G401 (cell line): ENCODE measurements at regions of chr17 and their contacts with region 1.

Region 1: DNA sequence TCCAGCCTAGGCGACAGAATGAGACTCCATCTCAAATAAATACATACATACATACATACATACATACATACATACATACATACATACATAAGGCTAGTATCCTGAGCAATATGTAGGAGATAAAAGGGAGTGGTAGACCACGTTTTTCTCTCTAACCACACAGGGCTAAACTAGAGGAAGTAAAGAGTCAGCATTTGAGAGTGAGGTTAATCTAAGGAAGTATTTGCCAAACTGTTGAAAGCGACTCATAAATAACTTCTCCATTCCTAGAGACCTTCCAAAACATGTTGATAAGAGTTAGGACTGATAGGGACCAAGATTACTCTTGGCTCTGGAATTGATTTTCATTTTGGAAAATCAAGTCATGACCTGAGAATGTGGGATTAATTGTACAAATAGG is 68.9 kb downstream of the NEUROD2 start:
- DNase-seq: no peak

Region 2: DNA sequence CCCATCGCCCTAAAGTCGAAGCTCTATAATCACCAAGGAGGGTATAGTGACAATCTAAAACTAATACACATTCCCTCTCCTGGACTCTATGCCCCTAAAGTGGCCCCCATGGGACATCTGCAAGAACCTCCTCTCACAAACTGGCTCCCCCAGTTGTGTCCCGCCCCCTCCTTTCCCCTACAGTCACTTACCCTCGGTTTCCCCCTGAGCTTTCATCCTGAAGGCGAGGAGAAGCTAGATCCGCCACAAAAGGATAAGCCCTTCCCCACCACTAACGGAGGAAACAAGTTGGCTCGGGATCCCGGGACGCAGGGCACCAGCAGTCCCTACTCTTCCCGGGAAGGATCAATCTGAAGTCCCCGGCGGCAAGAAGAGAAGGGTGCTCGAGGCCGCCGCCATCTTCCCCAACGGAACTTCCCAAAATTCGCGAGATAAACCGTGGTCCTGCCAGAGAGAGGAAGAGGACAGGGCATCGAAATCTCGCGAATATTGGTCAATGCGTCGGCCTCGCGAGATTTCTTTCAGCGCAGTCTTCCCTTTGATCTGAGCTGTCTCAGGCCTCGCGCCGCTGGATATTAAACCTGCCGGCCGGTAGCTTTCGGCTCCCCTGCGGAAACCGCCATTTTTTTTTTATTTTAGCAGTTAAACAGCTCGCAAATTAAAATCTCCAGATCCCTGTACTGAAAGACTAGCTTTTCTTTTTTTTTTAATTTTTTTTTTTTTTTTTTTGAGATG is 87.9 kb before region 1 on chr17 and contains the start of gene MED1:
- in situ Hi-C with region 1: no loop called
- DNase-seq: peak; percentile 97
- total RNA-seq, gene MED1: 22.0 and 22.5 TPM in 2 replicates

Region 3: DNA sequence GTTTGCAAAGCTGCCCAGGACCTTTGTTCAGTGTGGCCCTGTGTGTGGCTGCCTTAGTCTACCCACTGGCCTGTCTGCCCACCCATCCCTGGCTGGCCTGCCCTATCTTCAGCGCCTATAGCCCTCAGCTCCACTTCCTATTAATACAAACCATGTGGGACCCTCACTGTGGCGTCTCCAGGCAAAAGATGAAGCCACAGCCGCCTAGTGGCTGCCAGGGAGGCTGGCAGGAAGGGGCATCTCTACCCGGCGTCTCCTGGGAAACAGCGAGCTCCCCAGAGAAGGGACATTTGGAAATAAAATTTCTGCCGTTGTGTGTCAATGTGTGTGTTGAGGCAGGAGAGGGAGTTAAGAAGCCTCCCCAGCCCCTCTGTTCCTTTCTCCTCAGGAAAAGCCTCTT is 37.3 kb after region 1 on chr17:
- in situ Hi-C with region 1: loop called (anchors 5 kb)
- DNase-seq: peak; percentile 23